ENCODE measurements at regions of chr4 and their contacts with region 1.

Region 1: GRCh38 chr4:166414431-166414830 is 541.4 kb downstream of the TLL1 start:
- DNase-seq: no peak
- ATAC-seq: no peak
- H3K4me3 ChIP-seq: no peak overlapping the region
- H3K27ac ChIP-seq: no peak overlapping the region
- H3K4me1 ChIP-seq: no peaks in the 10 kb centered on the region
- H3K27me3 ChIP-seq: no peaks in the 10 kb centered on the region
- CTCF ChIP-seq: no peak

Region 2: DNA sequence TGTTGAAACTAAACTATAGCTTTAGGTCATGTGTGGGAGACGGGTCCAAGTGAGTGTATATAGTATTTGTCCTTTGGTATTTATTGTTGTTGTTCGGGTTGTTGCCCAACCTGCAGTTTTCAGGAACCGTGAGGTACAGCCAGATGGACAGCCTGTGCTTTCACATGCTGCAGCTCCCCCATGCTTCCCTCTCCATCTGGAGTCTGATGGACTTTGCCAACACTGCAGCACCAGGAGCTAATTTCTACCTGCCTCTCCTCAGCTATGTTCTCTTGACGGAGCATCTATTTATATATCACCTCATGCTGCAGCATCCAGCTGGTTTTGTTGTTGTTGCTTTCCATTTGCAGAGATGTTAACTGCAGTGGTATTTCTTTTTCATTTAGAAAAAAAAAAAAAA is 461.2 kb before region 1 on chr4:
- intact Hi-C with region 1: loop called in 1 of 10 experiments (anchors 10 kb)
- DNase-seq: no peak
- ATAC-seq: no peak
- H3K4me3 ChIP-seq: no peak overlapping the region
- H3K27ac ChIP-seq: no peak overlapping the region
- H3K4me1 ChIP-seq: no peaks in the 10 kb centered on the region
- H3K27me3 ChIP-seq: no peaks in the 10 kb centered on the region
- CTCF ChIP-seq: no peak

Region 3: GRCh38 chr4:166400270-166400894 is 14.0 kb before region 1 on chr4:
- intact Hi-C with region 1: no loop called
- DNase-seq: no peak
- ATAC-seq: no peak
- H3K4me3 ChIP-seq: no peak overlapping the region
- H3K27ac ChIP-seq: no peak overlapping the region
- H3K4me1 ChIP-seq: no peaks in the 10 kb centered on the region
- H3K27me3 ChIP-seq: no peaks in the 10 kb centered on the region
- CTCF ChIP-seq: no peak

Measured in heart right ventricle (tissue), 16 donors.